ENCODE measurements at regions of chrX and their contacts with region 1.

Region 1: GRCh38 chrX:55057675-55058249 is 17.1 kb upstream of the PAGE2B start:
- DNase-seq: peak; percentile 53
- ATAC-seq: peak; percentile 71
- H3K4me3 ChIP-seq: peak overlapping the region in 3 of 5 experiments; percentile 18 to 24 (median 18)
- H3K4me3 Mint-ChIP-seq: peak overlapping the region; percentile 78
- H3K27ac ChIP-seq: no peak overlapping the region
- H3K27ac Mint-ChIP-seq: no peak overlapping the region
- H3K4me1 ChIP-seq: peaks cover 6 to 7% of the 10 kb centered on the region in 2 donors
- H3K4me1 Mint-ChIP-seq: peaks cover 10% of the 10 kb centered on the region
- H3K27me3 ChIP-seq: no peaks in the 10 kb centered on the region
- H3K27me3 Mint-ChIP-seq: no peaks in the 10 kb centered on the region
- CTCF ChIP-seq: peak; percentile 77

Region 2: GRCh38 chrX:53683556-53684414 is 1374.0 kb before region 1 on chrX:
- CTCF ChIA-PET with region 1: no interaction called
- POLR2A ChIA-PET with region 1: no interaction called
- intact Hi-C with region 1: loop called (anchors 10 kb)
- DNase-seq: peak; percentile 96
- ATAC-seq: peak; percentile 70
- H3K4me3 ChIP-seq: peak overlapping the region; percentile 65 to 77 (median 69)
- H3K4me3 Mint-ChIP-seq: peak overlapping the region; percentile 94
- H3K27ac ChIP-seq: peak overlapping the region; percentile 95 to 98
- H3K27ac Mint-ChIP-seq: peak overlapping the region; percentile 99
- H3K4me1 ChIP-seq: peaks cover 21 to 26% of the 10 kb centered on the region in 2 donors
- H3K4me1 Mint-ChIP-seq: peaks cover 39% of the 10 kb centered on the region
- H3K27me3 ChIP-seq: no peaks in the 10 kb centered on the region
- H3K27me3 Mint-ChIP-seq: no peaks in the 10 kb centered on the region
- CTCF ChIP-seq: no peak

Region 3: DNA sequence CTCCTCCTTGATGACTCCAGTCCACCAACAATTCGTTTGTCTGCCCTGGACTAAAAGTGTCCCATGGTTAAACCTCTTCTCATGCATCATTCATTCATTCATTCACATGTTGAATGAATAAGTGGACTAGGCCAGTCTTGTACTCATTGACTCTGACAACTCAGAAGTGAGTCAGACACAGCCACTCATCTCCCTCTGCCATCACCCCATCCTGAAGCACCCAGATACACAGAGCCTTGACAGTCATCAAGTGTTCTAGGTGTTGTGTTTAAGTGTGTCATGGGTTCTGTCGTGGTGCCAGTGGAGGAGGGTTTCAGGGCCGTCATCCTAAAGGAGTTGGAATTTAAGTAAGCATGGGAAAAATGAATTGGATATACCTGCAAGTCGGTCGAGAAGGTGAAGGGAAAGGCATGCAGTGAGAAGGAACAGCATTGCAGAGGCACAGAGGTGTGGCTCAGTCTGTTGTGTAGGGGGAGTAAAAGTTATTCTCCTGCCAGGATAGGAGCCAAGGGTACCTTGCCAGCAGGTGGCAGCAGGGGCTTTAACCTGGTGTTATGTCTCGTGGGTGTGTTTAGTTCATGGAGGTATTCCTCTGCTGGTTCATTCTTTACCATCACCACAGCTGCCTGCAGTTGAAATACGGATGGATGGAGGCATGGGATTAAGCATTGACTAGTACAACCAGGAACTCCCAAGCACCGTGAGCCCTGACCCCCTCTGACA is 231.9 kb before region 1 on chrX:
- CTCF ChIA-PET with region 1: no interaction called
- POLR2A ChIA-PET with region 1: no interaction called
- intact Hi-C with region 1: loop called (anchors 5 kb)
- DNase-seq: no peak
- ATAC-seq: no peak
- H3K4me3 ChIP-seq: no peak overlapping the region
- H3K4me3 Mint-ChIP-seq: no peak overlapping the region
- H3K27ac ChIP-seq: no peak overlapping the region
- H3K27ac Mint-ChIP-seq: no peak overlapping the region
- H3K4me1 ChIP-seq: no peaks in the 10 kb centered on the region
- H3K4me1 Mint-ChIP-seq: no peaks in the 10 kb centered on the region
- H3K27me3 ChIP-seq: no peaks in the 10 kb centered on the region
- H3K27me3 Mint-ChIP-seq: no peaks in the 10 kb centered on the region
- CTCF ChIP-seq: peak; percentile 19

Region 4: DNA sequence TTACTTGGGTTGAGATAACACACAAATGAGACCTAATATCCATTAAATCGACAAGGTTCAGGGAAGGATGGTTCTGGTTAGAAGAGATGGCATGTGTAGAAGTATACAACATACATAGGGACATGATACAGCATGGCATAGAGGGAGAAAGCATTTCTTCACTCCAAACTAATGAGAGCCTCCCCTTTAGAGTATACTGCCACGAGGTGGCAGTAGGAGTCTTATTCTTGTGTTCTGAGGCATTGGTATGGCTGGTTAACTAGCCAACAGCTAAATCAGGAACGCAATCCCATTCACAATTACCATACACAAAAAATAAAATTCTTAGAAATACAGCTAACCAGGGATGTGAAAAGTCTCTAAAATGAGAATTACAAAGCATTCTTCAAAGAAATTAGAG is 166.2 kb before region 1 on chrX:
- CTCF ChIA-PET with region 1: interaction called, 12 read pairs
- POLR2A ChIA-PET with region 1: no interaction called
- intact Hi-C with region 1: no loop called
- DNase-seq: peak; percentile 47
- ATAC-seq: no peak
- H3K4me3 ChIP-seq: no peak overlapping the region
- H3K4me3 Mint-ChIP-seq: no peak overlapping the region
- H3K27ac ChIP-seq: no peak overlapping the region
- H3K27ac Mint-ChIP-seq: no peak overlapping the region
- H3K4me1 ChIP-seq: no peaks in the 10 kb centered on the region
- H3K4me1 Mint-ChIP-seq: no peaks in the 10 kb centered on the region
- H3K27me3 ChIP-seq: peaks cover 0 to 3% (median 0%) of the 10 kb centered on the region in 4 experiments
- H3K27me3 Mint-ChIP-seq: peaks cover 14% of the 10 kb centered on the region
- CTCF ChIP-seq: peak; percentile 39

Region 5: GRCh38 chrX:55201930-55202579 is 144.3 kb after region 1 on chrX:
- CTCF ChIA-PET with region 1: no interaction called
- POLR2A ChIA-PET with region 1: no interaction called
- intact Hi-C with region 1: no loop called
- DNase-seq: no peak
- ATAC-seq: no peak
- H3K4me3 ChIP-seq: no peak overlapping the region
- H3K4me3 Mint-ChIP-seq: no peak overlapping the region
- H3K27ac ChIP-seq: no peak overlapping the region
- H3K27ac Mint-ChIP-seq: no peak overlapping the region
- H3K4me1 ChIP-seq: no peaks in the 10 kb centered on the region
- H3K4me1 Mint-ChIP-seq: no peaks in the 10 kb centered on the region
- H3K27me3 ChIP-seq: no peaks in the 10 kb centered on the region
- H3K27me3 Mint-ChIP-seq: peaks cover 3% of the 10 kb centered on the region
- CTCF ChIP-seq: no peak